ENCODE measurements at regions of chr15 and their contacts with region 1.

Region 1: DNA sequence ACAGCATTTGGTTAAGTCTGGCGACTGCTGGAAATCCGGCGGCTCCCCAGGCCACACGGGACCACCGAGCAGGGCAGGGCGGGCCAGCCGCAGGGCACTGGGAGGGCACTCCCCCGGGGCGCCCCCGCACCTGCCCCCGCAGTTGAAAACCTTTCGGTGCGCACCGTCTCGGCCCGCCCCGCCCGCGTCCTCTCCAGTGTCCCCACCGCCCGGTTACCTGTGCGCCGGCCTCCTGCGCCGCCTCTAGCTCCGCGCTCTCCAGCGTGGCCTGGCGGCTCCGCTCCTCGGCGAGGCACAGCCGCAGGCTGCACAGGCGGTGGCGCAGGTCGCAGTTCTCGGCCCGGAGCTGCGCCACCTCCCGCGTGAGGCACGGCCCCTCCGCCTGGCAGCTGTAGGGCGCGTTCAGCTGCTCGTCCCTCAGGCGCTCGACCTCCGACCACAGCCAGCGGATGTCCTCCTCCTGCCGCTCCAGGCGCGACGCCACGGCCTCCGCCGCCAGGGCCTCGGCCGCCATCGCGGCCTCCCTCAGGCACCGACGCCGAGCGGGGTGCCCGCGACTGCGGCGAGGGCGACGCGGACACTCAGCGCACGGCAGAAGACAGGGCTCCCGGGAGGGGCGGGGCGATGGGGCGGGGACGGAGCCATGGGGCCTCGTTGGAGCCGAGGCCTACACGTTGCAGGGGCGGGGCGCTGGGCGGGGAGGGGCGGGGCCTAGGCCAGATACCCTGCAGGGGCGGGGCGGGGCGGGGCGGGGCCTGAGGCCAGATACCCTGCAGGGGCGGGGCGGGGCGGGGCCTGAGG is at the start of gene TARS3:
- DNase-seq: peak; percentile 96
- ATAC-seq: peak; percentile 95
- H3K4me3 Mint-ChIP-seq: peak within 1 kb of the TSS; percentile 79
- H3K27ac Mint-ChIP-seq: peak within 1 kb of the TSS; percentile 90
- H3K4me1 Mint-ChIP-seq: peaks cover 16% of the 10 kb centered on the region
- H3K27me3 Mint-ChIP-seq: no peaks in the 10 kb centered on the region
- total RNA-seq, gene TARS3: 8.1 to 11.8 TPM

Region 2: DNA sequence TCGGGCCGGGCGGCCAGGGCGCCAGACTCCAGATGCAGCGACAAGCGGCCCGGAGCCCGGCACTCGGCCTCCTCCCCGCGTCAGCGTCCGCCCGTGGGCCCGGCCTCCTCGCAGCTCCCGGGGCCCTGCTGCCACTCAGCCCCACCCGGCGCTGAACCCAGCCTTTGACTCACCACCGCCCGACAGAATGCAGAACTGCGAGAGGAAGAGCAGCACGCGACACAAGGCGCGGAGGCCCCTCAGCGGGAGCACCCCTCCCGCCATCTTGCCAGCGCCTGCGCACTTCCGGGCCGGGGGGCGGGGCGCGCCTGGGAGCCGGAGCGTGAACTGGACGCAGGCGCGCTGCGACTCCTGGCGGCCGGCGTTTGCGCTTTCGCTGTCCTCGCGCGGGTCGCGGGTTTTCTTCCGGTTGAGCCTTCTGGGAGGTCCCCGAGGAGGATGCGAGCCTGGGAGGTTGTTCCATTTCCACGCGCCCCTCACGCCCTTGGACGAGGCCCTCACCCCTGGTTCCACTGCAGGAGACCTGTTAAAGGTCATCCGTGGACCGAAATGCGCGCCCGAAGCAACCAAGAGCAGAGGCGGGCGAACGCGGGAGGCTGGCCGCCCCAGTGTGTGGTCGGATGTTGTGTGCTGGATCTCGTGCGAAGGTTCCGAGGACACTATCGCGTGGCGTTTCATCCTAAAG is 71.8 kb before region 1 on chr15 and contains the start of gene TM2D3:
- CTCF ChIA-PET with region 1: interaction called, 11 read pairs
- DNase-seq: peak; percentile 96
- ATAC-seq: peak; percentile 92
- H3K4me3 Mint-ChIP-seq: peak within 1 kb of the TSS; percentile 93
- H3K27ac Mint-ChIP-seq: peak within 1 kb of the TSS; percentile 96
- H3K4me1 Mint-ChIP-seq: peaks cover 46% of the 10 kb centered on the region
- H3K27me3 Mint-ChIP-seq: no peaks in the 10 kb centered on the region
- total RNA-seq, gene TM2D3: 43.2 to 51.6 TPM

Region 3: DNA sequence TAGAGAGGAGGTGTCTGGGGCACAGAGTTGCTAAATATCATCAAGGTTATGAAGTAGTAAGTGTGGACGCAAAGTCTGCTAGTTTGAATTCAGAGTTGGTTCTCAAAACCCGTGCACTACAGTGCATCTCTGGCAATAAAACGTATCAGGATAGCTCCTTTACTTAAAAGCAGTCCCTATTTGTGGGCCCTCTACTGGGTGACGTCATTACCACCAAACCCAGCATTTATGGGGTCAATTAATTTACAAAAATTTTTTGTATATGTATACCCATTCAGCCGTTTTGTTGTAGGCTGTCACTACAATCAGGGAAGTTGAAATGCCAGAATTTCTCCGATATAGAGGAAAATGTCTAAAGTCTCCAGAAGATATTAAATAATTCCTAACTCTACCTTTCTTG is 96.7 kb after region 1 on chr15:
- CTCF ChIA-PET with region 1: no interaction called
- DNase-seq: no peak
- ATAC-seq: no peak
- H3K4me3 Mint-ChIP-seq: no peak overlapping the region
- H3K27ac Mint-ChIP-seq: no peak overlapping the region
- H3K4me1 Mint-ChIP-seq: no peaks in the 10 kb centered on the region
- H3K27me3 Mint-ChIP-seq: peaks cover 9% of the 10 kb centered on the region